ENCODE measurements at regions of chr20 and their contacts with region 1.

Region 1: GRCh38 chr20:17536944-17537444 is 5.8 kb upstream of the BFSP1 start:
- DNase-seq: peak; percentile 22 to 73 (median 65)
- ATAC-seq: peak; percentile 98
- H3K4me3 ChIP-seq: no peak overlapping the region
- H3K4me3 Mint-ChIP-seq: no peak overlapping the region
- H3K27ac ChIP-seq: no peak overlapping the region
- H3K27ac Mint-ChIP-seq: peak overlapping the region in 2 of 9 donors; percentile 50 to 52
- H3K4me1 ChIP-seq: peaks cover 0 to under 1% of the 10 kb centered on the region in 2 donors
- H3K4me1 Mint-ChIP-seq: peaks cover 0 to 39% (median 0%) of the 10 kb centered on the region in 7 donors
- H3K27me3 ChIP-seq: no peaks in the 10 kb centered on the region
- H3K27me3 Mint-ChIP-seq: peaks cover 10 to 30% (median 18%) of the 10 kb centered on the region in 5 donors

Region 2: GRCh38 chr20:17598013-17598550 is 61.1 kb after region 1 on chr20:
- CTCF ChIA-PET with region 1: no interaction called
- POLR2A ChIA-PET with region 1: no interaction called
- intact Hi-C with region 1: no loop called
- DNase-seq: no peak
- ATAC-seq: no peak
- H3K4me3 ChIP-seq: no peak overlapping the region
- H3K4me3 Mint-ChIP-seq: no peak overlapping the region
- H3K27ac ChIP-seq: no peak overlapping the region
- H3K27ac Mint-ChIP-seq: no peak overlapping the region
- H3K4me1 ChIP-seq: no peaks in the 10 kb centered on the region
- H3K4me1 Mint-ChIP-seq: peaks cover 21 to 54% (median 41%) of the 10 kb centered on the region in 7 donors
- H3K27me3 ChIP-seq: no peaks in the 10 kb centered on the region
- H3K27me3 Mint-ChIP-seq: peaks cover 0 to 2% (median 0%) of the 10 kb centered on the region in 5 donors

Region 3: DNA sequence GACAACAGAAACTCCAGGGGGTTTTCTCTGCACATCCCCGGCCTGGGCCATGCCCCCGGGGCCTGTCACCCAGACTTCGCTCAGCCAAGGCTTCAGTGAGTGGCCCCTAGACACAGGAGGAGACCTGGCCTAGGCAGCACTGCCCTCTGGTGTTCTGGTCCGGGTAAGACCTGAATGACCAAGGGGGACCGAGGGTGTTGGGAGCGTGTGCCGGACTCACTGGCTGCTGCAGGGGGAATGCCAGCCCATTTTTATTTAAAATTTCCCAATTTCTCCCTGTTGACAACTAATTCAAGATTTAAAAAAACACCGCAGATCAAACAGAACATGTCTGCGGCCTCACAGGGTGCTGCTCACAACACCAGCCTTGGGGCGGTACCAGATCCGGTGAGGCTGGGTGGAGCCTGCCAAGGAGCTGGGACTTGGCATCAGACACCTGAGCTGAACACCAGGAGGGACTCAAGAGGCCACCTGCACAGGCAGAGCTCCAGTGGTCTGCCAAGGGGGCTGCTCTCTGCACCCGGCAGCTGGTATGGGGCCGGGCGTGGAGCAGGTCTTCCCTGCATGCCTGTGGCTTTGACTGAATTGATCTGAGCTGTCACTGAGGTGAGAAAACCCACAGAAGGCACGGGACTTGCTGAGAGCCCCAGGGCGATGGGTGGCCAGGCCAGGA is 80.7 kb after region 1 on chr20:
- CTCF ChIA-PET with region 1: interaction called, 13 read pairs
- POLR2A ChIA-PET with region 1: no interaction called
- intact Hi-C with region 1: loop called (anchors 1 kb)
- DNase-seq: peak; percentile 22 to 59 (median 30)
- ATAC-seq: peak; percentile 56
- H3K4me3 ChIP-seq: no peak overlapping the region
- H3K4me3 Mint-ChIP-seq: no peak overlapping the region
- H3K27ac ChIP-seq: no peak overlapping the region
- H3K27ac Mint-ChIP-seq: peak overlapping the region in 1 of 9 donors; percentile 14
- H3K4me1 ChIP-seq: peaks cover 3 to 4% of the 10 kb centered on the region in 2 donors
- H3K4me1 Mint-ChIP-seq: peaks cover 0 to 8% (median 6%) of the 10 kb centered on the region in 7 donors
- H3K27me3 ChIP-seq: no peaks in the 10 kb centered on the region
- H3K27me3 Mint-ChIP-seq: no peaks in the 10 kb centered on the region

Region 4: GRCh38 chr20:17648791-17649730 is 112.1 kb after region 1 on chr20:
- CTCF ChIA-PET with region 1: interaction called, 9 read pairs
- POLR2A ChIA-PET with region 1: no interaction called
- intact Hi-C with region 1: loop called (anchors 1 kb)
- DNase-seq: peak in 7 of 9 donors; percentile 14 to 54 (median 30)
- ATAC-seq: peak; percentile 67
- H3K4me3 ChIP-seq: no peak overlapping the region
- H3K4me3 Mint-ChIP-seq: peak overlapping the region in 2 of 10 donors; percentile 25 to 28
- H3K27ac ChIP-seq: no peak overlapping the region
- H3K27ac Mint-ChIP-seq: peak overlapping the region in 3 of 9 donors; percentile 67 to 85 (median 72)
- H3K4me1 ChIP-seq: no peaks in the 10 kb centered on the region
- H3K4me1 Mint-ChIP-seq: peaks cover 4 to 15% (median 8%) of the 10 kb centered on the region in 7 donors
- H3K27me3 ChIP-seq: no peaks in the 10 kb centered on the region
- H3K27me3 Mint-ChIP-seq: no peaks in the 10 kb centered on the region

Region 5: GRCh38 chr20:17898548-17898994 is 361.6 kb after region 1 on chr20:
- CTCF ChIA-PET with region 1: interaction called, 12 read pairs
- POLR2A ChIA-PET with region 1: no interaction called
- intact Hi-C with region 1: loop called (anchors 1 kb)
- DNase-seq: peak; percentile 23 to 64 (median 54)
- ATAC-seq: peak; percentile 81
- H3K4me3 ChIP-seq: no peak overlapping the region
- H3K4me3 Mint-ChIP-seq: no peak overlapping the region
- H3K27ac ChIP-seq: no peak overlapping the region
- H3K27ac Mint-ChIP-seq: no peak overlapping the region
- H3K4me1 ChIP-seq: no peaks in the 10 kb centered on the region
- H3K4me1 Mint-ChIP-seq: peaks cover 0 to 21% (median 11%) of the 10 kb centered on the region in 7 donors
- H3K27me3 ChIP-seq: no peaks in the 10 kb centered on the region
- H3K27me3 Mint-ChIP-seq: peaks cover 22 to 41% (median 34%) of the 10 kb centered on the region in 5 donors

Region 6: DNA sequence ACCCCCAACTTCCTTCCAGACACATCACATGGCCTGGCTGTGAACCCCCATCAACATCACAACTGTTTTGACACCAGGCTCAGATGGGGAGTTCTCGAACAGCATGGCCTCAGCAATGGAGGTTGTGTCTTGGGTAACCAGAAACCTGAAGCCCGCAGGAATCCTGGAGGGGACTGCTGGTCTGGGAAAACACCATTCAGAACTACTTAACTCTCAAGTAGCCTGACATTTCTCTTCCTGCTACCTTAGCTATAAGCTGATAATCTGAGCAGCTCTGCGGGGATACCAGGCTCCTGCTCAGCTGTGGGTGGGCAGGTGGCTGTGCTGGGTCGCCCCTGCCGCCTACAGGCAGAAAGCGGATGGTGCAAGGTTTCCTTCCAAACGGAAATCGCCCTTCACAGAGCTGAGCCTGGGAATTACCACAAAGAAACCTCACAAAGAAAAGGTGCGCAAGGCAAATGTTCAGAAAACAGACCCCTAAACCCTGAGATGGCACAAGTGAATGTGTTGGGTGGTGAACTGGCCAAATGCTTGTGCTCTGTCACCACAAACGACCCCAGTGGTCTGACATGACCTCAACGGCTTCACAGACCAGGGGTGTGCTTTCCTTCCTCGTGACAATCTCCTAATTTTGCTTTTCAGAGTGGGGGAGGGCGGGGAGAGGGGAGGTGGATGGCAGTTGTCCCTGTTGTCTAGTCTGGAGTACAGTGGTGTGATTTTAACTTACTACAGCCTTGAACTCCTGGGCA is 402.1 kb after region 1 on chr20:
- CTCF ChIA-PET with region 1: no interaction called
- POLR2A ChIA-PET with region 1: no interaction called
- intact Hi-C with region 1: loop called in 1 of 2 experiments (anchors 1 kb)
- DNase-seq: peak; percentile 18 to 53 (median 34)
- ATAC-seq: peak; percentile 91
- H3K4me3 ChIP-seq: no peak overlapping the region
- H3K4me3 Mint-ChIP-seq: peak overlapping the region in 6 of 10 donors; percentile 4 to 43 (median 37)
- H3K27ac ChIP-seq: no peak overlapping the region
- H3K27ac Mint-ChIP-seq: peak overlapping the region in 4 of 9 donors; percentile 34 to 68 (median 51)
- H3K4me1 ChIP-seq: peaks cover 5 to 9% of the 10 kb centered on the region in 2 donors
- H3K4me1 Mint-ChIP-seq: peaks cover 0 to 22% (median 12%) of the 10 kb centered on the region in 7 donors
- H3K27me3 ChIP-seq: no peaks in the 10 kb centered on the region
- H3K27me3 Mint-ChIP-seq: no peaks in the 10 kb centered on the region